ENCODE measurements at regions of chr13 and their contacts with region 1.

Region 1: GRCh38 chr13:28324181-28324789 is 170.6 kb downstream of the FLT1 start:
- DNase-seq: peak; percentile 73
- ATAC-seq: peak; percentile 75
- H3K4me3 ChIP-seq: no peak overlapping the region
- H3K27ac ChIP-seq: no peak overlapping the region
- H3K4me1 ChIP-seq: peaks cover 9% of the 10 kb centered on the region
- H3K27me3 ChIP-seq: no peaks in the 10 kb centered on the region
- CTCF ChIP-seq: peak; percentile 84
- POLR2A ChIP-seq: no peak
- RAD21 ChIP-seq: peak; percentile 89

Region 2: GRCh38 chr13:28185256-28185655 is 139.0 kb before region 1 on chr13:
- CTCF ChIA-PET with region 1: no interaction called
- POLR2A ChIA-PET with region 1: no interaction called
- dilution Hi-C with region 1: no loop called
- in situ Hi-C with region 1: no loop called
- intact Hi-C with region 1: no loop called
- DNase-seq: no peak
- ATAC-seq: no peak
- H3K4me3 ChIP-seq: no peak overlapping the region
- H3K27ac ChIP-seq: no peak overlapping the region
- H3K4me1 ChIP-seq: peaks cover 1% of the 10 kb centered on the region; the same call in 1 of the 2 replicates
- H3K27me3 ChIP-seq: no peaks in the 10 kb centered on the region
- CTCF ChIP-seq: no peak
- POLR2A ChIP-seq: no peak
- RAD21 ChIP-seq: no peak

Region 3: GRCh38 chr13:28475916-28476725 is 151.8 kb after region 1 on chr13:
- CTCF ChIA-PET with region 1: no interaction called
- POLR2A ChIA-PET with region 1: no interaction called
- dilution Hi-C with region 1: no loop called
- in situ Hi-C with region 1: no loop called
- intact Hi-C with region 1: loop called (anchors 5 kb)
- DNase-seq: peak; percentile 97
- ATAC-seq: peak; percentile 63
- H3K4me3 ChIP-seq: no peak overlapping the region
- H3K27ac ChIP-seq: peak overlapping the region; percentile 63
- H3K4me1 ChIP-seq: peaks cover 14% of the 10 kb centered on the region
- H3K27me3 ChIP-seq: no peaks in the 10 kb centered on the region
- CTCF ChIP-seq: no peak
- POLR2A ChIP-seq: no peak
- RAD21 ChIP-seq: no peak

Region 4: DNA sequence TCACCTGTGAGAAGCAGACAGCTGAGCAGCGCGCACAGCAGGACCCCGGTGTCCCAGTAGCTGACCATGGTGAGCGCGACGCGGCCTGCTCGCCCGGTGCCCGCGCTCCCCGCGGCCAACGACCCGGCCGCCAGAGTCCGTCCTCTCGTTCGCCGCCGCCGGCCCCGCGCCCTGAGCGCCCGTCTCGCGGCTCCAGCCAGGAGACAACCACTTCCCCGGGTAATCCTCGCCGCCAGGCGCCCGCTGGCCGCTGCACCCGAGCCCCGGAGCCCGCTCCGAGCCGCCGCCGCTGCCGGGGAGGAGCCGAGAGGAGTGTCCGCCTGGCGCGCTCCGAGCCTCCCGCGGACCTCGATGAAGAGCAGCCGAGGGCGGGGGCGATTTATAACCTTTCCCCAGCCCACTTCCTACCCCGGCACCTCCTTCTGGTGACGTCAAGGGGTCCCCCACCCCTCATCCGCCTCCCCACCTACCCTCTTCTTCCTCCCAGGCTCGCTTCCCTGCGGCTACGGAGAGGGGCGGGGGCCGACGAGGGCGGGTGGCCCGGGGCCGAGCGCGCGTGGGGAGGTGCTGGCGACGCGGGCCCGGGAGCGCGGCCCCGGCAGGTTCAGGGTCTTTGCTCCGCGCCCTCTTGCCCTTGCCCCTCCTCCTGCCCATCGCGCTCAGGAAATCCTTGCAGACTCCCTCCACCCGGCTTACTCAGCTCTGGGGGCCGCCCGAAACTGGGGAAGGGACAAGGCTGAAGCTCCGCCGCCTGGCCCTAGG is 170.7 kb after region 1 on chr13 and contains the start of gene FLT1:
- CTCF ChIA-PET with region 1: interaction called, 6 read pairs
- POLR2A ChIA-PET with region 1: interaction called, 4 read pairs
- dilution Hi-C with region 1: no loop called
- in situ Hi-C with region 1: no loop called
- intact Hi-C with region 1: loop called (anchors 5 kb)
- DNase-seq: peak; percentile 38
- ATAC-seq: peak; percentile 68
- H3K4me3 ChIP-seq: peak within 1 kb of the TSS; percentile 94
- H3K27ac ChIP-seq: no peak within 1 kb of the TSS; the same call in 1 of the 2 replicates
- H3K4me1 ChIP-seq: peaks cover 4% of the 10 kb centered on the region; the same call in 1 of the 2 replicates
- H3K27me3 ChIP-seq: peaks cover 22% of the 10 kb centered on the region; the same call in 1 of the 2 replicates
- CTCF ChIP-seq: no peak
- POLR2A ChIP-seq: peak; percentile 64; the same call in 1 of the 2 replicates
- RAD21 ChIP-seq: no peak; the same call in 1 of the 2 replicates
- total RNA-seq, gene FLT1: 10.0 and 10.4 TPM in 2 replicates

Region 5: DNA sequence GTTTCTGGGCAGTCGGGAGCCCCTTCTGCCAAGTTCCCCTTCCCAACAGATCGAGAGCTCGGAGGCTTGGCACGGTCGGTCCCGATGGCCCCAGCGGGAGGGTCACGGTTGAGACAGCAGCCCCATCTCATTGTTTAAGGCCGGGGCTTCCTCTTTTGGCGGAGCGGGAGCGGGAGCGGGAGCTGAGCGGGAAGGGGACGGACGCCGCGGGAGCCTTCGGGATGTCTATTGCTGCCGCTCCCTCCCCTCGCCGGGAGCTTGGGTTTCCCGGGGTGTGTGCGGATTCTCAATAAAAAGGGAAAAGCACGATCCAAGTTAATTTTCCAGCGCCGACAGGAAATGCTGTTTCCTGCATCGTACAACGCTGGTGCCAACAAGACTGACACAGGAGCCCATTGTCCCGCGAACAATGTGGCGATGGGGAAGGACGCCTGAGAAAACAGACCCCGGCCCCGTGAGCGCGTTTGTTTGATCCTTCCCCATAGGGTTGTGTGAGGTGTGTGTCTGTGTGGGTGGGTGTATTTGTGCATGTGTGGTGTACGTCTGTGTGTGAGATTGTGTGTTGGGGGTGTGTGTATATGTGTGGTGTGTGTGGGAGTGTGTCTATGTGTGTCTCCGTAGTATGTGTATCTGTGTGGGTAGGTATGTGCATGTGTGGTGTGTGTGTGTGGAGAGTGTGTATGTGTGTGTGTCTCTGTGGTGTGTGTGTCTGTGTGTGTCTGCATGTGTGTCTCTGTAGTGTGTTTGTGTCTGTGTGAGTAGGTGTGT is 207.0 kb after region 1 on chr13:
- CTCF ChIA-PET with region 1: interaction called, 4 read pairs
- POLR2A ChIA-PET with region 1: no interaction called
- dilution Hi-C with region 1: no loop called
- in situ Hi-C with region 1: no loop called
- intact Hi-C with region 1: loop called (anchors 1 kb)
- DNase-seq: peak; percentile 30
- ATAC-seq: peak; percentile 27
- H3K4me3 ChIP-seq: peak overlapping the region; percentile 37
- H3K27ac ChIP-seq: no peak overlapping the region
- H3K4me1 ChIP-seq: peaks cover 11% of the 10 kb centered on the region
- H3K27me3 ChIP-seq: peaks cover 3% of the 10 kb centered on the region; the same call in 1 of the 2 replicates
- CTCF ChIP-seq: no peak
- POLR2A ChIP-seq: no peak
- RAD21 ChIP-seq: no peak

Region 6: GRCh38 chr13:28636674-28637317 is 312.5 kb after region 1 on chr13:
- CTCF ChIA-PET with region 1: interaction called, 4 read pairs
- POLR2A ChIA-PET with region 1: no interaction called
- dilution Hi-C with region 1: no loop called
- in situ Hi-C with region 1: loop called (anchors 5 kb)
- intact Hi-C with region 1: loop called (anchors 1 kb)
- DNase-seq: peak; percentile 89
- ATAC-seq: peak; percentile 93
- H3K4me3 ChIP-seq: no peak overlapping the region
- H3K27ac ChIP-seq: no peak overlapping the region
- H3K4me1 ChIP-seq: peaks cover 2% of the 10 kb centered on the region; the same call in 1 of the 2 replicates
- H3K27me3 ChIP-seq: no peaks in the 10 kb centered on the region
- CTCF ChIP-seq: peak; percentile 93
- POLR2A ChIP-seq: peak; percentile 44; the same call in 1 of the 2 replicates
- RAD21 ChIP-seq: peak; percentile 98

Region 7: GRCh38 chr13:28658796-28659620 is 334.7 kb after region 1 on chr13 and contains the start of gene POMP:
- CTCF ChIA-PET with region 1: interaction called, 4 read pairs
- POLR2A ChIA-PET with region 1: no interaction called
- dilution Hi-C with region 1: no loop called
- in situ Hi-C with region 1: no loop called
- intact Hi-C with region 1: loop called (anchors 2 kb)
- DNase-seq: peak; percentile 95
- ATAC-seq: peak; percentile 80
- H3K4me3 ChIP-seq: peak within 1 kb of the TSS; percentile 93
- H3K27ac ChIP-seq: peak within 1 kb of the TSS; percentile 90
- H3K4me1 ChIP-seq: peaks cover 8% of the 10 kb centered on the region
- H3K27me3 ChIP-seq: no peaks in the 10 kb centered on the region
- CTCF ChIP-seq: no peak
- POLR2A ChIP-seq: peak; percentile 97
- RAD21 ChIP-seq: peak; percentile 25; the same call in 1 of the 2 replicates
- total RNA-seq, gene POMP: 60.2 and 117 TPM in 2 replicates

Region 8: DNA sequence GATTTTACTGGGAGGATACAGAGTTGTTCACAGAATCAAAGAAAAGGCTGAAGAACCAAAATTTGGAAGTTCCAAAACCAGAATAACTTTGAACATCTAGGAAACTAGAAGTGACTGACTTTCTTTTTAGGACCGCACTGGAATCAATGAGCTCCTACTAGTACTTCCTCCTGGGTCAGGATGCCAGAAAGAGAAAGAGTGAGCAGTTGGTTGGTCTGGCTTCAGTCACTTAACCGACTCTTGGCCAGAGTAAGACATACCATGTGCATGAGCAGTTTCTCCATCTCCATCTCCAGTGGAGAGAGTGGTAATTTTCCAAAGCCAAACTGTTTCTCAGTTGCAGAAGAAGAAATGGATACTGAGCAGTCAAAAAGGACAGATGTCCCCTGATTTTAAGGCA is 468.7 kb after region 1 on chr13:
- CTCF ChIA-PET with region 1: interaction called, 8 read pairs
- POLR2A ChIA-PET with region 1: no interaction called
- dilution Hi-C with region 1: no loop called
- in situ Hi-C with region 1: loop called (anchors 10 kb)
- intact Hi-C with region 1: loop called (anchors 1 kb)
- DNase-seq: peak; percentile 79
- ATAC-seq: peak; percentile 77
- H3K4me3 ChIP-seq: no peak overlapping the region
- H3K27ac ChIP-seq: no peak overlapping the region
- H3K4me1 ChIP-seq: no peaks in the 10 kb centered on the region
- H3K27me3 ChIP-seq: peaks cover 23% of the 10 kb centered on the region
- CTCF ChIP-seq: no peak
- POLR2A ChIP-seq: no peak
- RAD21 ChIP-seq: no peak